ENCODE measurements at regions of chr9 and their contacts with region 1.

Region 1: DNA sequence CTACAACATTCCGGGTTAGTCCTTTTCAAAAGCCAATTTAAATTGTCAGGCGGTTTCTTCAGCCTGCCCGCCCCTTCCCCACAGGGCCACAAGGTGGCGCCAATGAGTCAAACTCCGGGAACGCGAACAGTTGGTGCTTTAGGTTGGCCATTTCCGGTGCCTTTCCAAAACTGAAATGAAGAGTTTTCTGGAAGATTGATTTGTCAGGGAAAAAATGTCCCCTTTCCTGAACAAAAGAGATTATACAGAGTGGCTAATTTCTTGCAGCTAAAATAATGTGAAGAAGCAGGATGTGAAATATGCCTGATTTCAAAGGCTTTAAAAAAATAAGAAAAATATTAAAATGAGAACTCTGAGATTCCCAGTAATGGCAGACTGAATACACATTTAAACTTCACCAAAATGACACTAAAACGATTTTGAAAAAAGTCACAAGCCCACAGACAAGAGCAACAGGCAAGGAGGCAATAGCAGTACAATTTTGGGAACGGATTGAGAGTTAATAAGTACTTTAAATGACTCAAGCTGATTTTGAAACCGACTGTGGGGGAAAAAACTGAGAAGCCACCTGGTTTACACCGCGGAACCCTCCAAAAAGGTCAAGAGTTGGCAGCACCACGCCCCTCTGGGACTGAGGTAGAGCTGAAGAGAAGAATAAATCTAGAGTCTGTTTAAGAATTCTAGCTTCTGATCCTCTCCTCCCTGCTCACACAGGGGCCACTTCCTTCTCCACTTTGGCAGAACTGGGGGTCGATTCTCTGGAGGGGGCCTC is 45.7 kb downstream of the SLC46A2 start:
- DNase-seq: peak; percentile 76
- ATAC-seq: peak; percentile 63
- H3K4me3 ChIP-seq: no peak overlapping the region
- H3K4me3 Mint-ChIP-seq: no peak overlapping the region
- H3K27ac ChIP-seq: no peak overlapping the region
- H3K27ac Mint-ChIP-seq: no peak overlapping the region
- H3K4me1 ChIP-seq: peaks cover 7 to 8% of the 10 kb centered on the region in 2 donors
- H3K4me1 Mint-ChIP-seq: peaks cover 14% of the 10 kb centered on the region
- H3K27me3 ChIP-seq: no peaks in the 10 kb centered on the region
- H3K27me3 Mint-ChIP-seq: no peaks in the 10 kb centered on the region
- CTCF ChIP-seq: peak; percentile 100

Region 2: DNA sequence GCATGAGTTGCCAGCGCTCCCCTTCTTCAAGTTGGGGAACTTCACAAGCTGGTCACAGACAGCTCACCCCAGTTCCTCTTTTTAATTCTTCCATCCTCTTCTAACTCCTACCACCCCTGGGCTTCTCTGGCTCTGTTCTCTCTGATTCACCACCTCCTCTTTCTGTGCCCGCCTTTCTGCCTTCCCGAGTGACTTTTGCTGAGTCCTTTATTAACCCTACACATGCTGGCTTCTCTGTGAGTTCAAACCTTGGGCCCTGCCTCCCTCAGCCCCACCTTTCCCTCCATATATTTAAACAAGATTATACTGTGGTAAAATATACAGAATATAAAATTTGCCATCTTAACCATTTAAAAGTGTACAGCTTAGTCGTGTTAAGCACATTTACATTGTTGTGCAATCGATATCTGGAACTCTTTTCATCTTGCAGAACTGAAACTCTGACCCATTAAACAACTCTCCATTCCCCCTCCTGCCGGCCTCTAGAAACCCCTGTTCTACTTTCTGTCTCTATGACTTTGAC is 13.7 kb after region 1 on chr9:
- CTCF ChIA-PET with region 1: interaction called, 13 read pairs
- POLR2A ChIA-PET with region 1: no interaction called
- intact Hi-C with region 1: no loop called
- DNase-seq: peak; percentile 64
- ATAC-seq: peak; percentile 82
- H3K4me3 ChIP-seq: no peak overlapping the region
- H3K4me3 Mint-ChIP-seq: peak overlapping the region; percentile 65
- H3K27ac ChIP-seq: peak overlapping the region; percentile 15 to 22
- H3K27ac Mint-ChIP-seq: peak overlapping the region; percentile 70
- H3K4me1 ChIP-seq: peaks cover 45 to 47% of the 10 kb centered on the region in 2 donors
- H3K4me1 Mint-ChIP-seq: peaks cover 56% of the 10 kb centered on the region
- H3K27me3 ChIP-seq: no peaks in the 10 kb centered on the region
- H3K27me3 Mint-ChIP-seq: no peaks in the 10 kb centered on the region
- CTCF ChIP-seq: peak; percentile 18

Region 3: GRCh38 chr9:112900899-112901298 is 55.9 kb after region 1 on chr9:
- CTCF ChIA-PET with region 1: interaction called, 62 read pairs
- POLR2A ChIA-PET with region 1: no interaction called
- intact Hi-C with region 1: loop called (anchors 1 kb)
- DNase-seq: no peak
- ATAC-seq: no peak
- H3K4me3 ChIP-seq: no peak overlapping the region
- H3K4me3 Mint-ChIP-seq: no peak overlapping the region
- H3K27ac ChIP-seq: no peak overlapping the region
- H3K27ac Mint-ChIP-seq: no peak overlapping the region
- H3K4me1 ChIP-seq: peaks cover 9 to 15% of the 10 kb centered on the region in 2 donors
- H3K4me1 Mint-ChIP-seq: peaks cover 16% of the 10 kb centered on the region
- H3K27me3 ChIP-seq: peaks cover 0 to 14% (median 8%) of the 10 kb centered on the region in 4 experiments
- H3K27me3 Mint-ChIP-seq: peaks cover 11% of the 10 kb centered on the region
- CTCF ChIP-seq: no peak

Measured in B cell (primary cell).